GM12878 (cell line): ENCODE measurements at regions of chr5 and their contacts with region 1.

Region 1: GRCh38 chr5:138449501-138450239 is 10.8 kb downstream of the REEP2 start:
- DNase-seq: no peak
- ATAC-seq: peak; percentile 97
- H3K4me3 ChIP-seq: no peak overlapping the region
- H3K27ac ChIP-seq: no peak overlapping the region
- H3K4me1 ChIP-seq: peaks cover 4% of the 10 kb centered on the region; the same call in 1 of the 2 replicates
- H3K27me3 ChIP-seq: no peaks in the 10 kb centered on the region
- CTCF ChIP-seq: peak; percentile 91 to 96 (median 93)
- EP300 ChIP-seq: no peak
- POLR2A ChIP-seq: no peak
- RAD21 ChIP-seq: peak; percentile 63

Region 2: GRCh38 chr5:138369706-138370105 is 80.0 kb before region 1 on chr5:
- CTCF ChIA-PET with region 1: interaction called, 16 read pairs
- POLR2A ChIA-PET with region 1: no interaction called
- RAD21 ChIA-PET with region 1: no interaction called
- SMC1A ChIA-PET with region 1: no interaction called
- in situ Hi-C with region 1: no loop called
- intact Hi-C with region 1: no loop called
- DNase-seq: no peak
- ATAC-seq: peak; percentile 49
- H3K4me3 ChIP-seq: no peak overlapping the region
- H3K27ac ChIP-seq: peak overlapping the region; percentile 29
- H3K4me1 ChIP-seq: peaks cover 19% of the 10 kb centered on the region; the same call in 1 of the 2 replicates
- H3K27me3 ChIP-seq: no peaks in the 10 kb centered on the region
- CTCF ChIP-seq: no peak
- EP300 ChIP-seq: no peak
- POLR2A ChIP-seq: no peak
- RAD21 ChIP-seq: no peak

Region 3: GRCh38 chr5:138498376-138498775 is 48.7 kb after region 1 on chr5:
- CTCF ChIA-PET with region 1: interaction called, 123 read pairs
- POLR2A ChIA-PET with region 1: interaction called, 6 read pairs
- RAD21 ChIA-PET with region 1: interaction called, 56 read pairs
- SMC1A ChIA-PET with region 1: interaction called, 58 read pairs
- in situ Hi-C with region 1: no loop called
- intact Hi-C with region 1: loop called (anchors 1 kb)
- DNase-seq: no peak
- ATAC-seq: no peak
- H3K4me3 ChIP-seq: no peak overlapping the region
- H3K27ac ChIP-seq: no peak overlapping the region
- H3K4me1 ChIP-seq: no peaks in the 10 kb centered on the region
- H3K27me3 ChIP-seq: no peaks in the 10 kb centered on the region
- CTCF ChIP-seq: no peak
- EP300 ChIP-seq: no peak
- POLR2A ChIP-seq: no peak
- RAD21 ChIP-seq: no peak

Region 4: DNA sequence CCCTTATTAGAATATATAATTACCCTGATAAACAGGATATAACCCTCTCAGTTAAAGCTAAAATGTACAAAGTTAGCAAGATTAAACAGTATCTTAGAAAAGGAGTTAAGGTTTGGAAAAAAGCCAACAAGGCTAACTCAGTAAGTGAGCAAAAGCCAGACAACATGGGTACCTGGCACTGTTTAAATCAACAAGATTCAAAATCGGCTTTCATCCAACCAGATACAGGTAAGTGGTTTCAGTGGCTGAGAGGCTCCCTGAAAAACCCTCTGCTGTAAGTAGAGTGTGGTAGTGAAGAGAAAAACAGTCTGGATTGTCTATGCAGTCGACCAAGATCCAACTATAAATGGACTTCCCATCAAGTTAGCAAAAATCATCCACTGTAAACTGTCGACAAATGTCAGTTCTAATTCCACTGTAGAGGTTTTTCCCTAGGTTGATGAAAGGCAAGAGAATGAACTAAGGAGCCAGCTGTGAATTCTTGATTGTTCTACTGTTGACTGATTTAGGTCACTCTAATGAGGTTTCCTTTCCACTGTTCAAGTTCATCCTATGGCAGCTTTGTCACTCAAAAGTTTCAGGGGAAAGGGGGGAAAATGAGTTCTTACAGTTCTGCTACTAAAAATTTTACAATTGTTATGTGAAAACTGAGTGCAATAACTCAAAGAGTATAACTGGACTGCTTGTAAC is 66.0 kb after region 1 on chr5:
- CTCF ChIA-PET with region 1: interaction called, 13 read pairs
- POLR2A ChIA-PET with region 1: no interaction called
- RAD21 ChIA-PET with region 1: no interaction called
- SMC1A ChIA-PET with region 1: no interaction called
- in situ Hi-C with region 1: no loop called
- intact Hi-C with region 1: no loop called
- DNase-seq: no peak
- ATAC-seq: no peak
- H3K4me3 ChIP-seq: no peak overlapping the region
- H3K27ac ChIP-seq: no peak overlapping the region
- H3K4me1 ChIP-seq: no peaks in the 10 kb centered on the region
- H3K27me3 ChIP-seq: no peaks in the 10 kb centered on the region
- CTCF ChIP-seq: no peak
- EP300 ChIP-seq: no peak
- POLR2A ChIP-seq: no peak
- RAD21 ChIP-seq: no peak

Region 5: DNA sequence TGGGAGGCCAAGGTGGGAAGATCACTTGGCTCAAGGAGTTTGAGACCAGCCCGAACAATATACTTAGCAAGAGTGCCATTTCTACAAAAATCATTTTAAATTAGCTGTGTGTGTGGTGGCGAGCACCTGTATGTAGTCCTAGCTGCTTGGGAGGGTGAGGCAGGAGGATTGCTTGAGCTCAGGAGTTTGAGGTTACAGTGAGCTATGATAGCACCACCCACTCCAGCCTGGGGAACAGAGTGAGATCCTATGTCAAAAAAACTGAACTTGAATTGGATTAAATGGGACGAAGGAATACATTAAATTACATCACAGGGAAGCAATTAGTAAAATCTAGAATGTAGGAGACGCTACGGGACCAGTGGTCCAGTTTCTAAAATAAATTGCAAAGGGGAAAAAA is 99.7 kb after region 1 on chr5:
- CTCF ChIA-PET with region 1: interaction called, 15 read pairs
- POLR2A ChIA-PET with region 1: no interaction called
- RAD21 ChIA-PET with region 1: interaction called, 8 read pairs
- SMC1A ChIA-PET with region 1: interaction called, 3 read pairs
- in situ Hi-C with region 1: no loop called
- intact Hi-C with region 1: no loop called
- DNase-seq: no peak
- ATAC-seq: no peak
- H3K4me3 ChIP-seq: no peak overlapping the region
- H3K27ac ChIP-seq: no peak overlapping the region
- H3K4me1 ChIP-seq: peaks cover 3% of the 10 kb centered on the region; the same call in 1 of the 2 replicates
- H3K27me3 ChIP-seq: no peaks in the 10 kb centered on the region
- CTCF ChIP-seq: no peak
- EP300 ChIP-seq: no peak
- POLR2A ChIP-seq: no peak
- RAD21 ChIP-seq: no peak

Region 6: DNA sequence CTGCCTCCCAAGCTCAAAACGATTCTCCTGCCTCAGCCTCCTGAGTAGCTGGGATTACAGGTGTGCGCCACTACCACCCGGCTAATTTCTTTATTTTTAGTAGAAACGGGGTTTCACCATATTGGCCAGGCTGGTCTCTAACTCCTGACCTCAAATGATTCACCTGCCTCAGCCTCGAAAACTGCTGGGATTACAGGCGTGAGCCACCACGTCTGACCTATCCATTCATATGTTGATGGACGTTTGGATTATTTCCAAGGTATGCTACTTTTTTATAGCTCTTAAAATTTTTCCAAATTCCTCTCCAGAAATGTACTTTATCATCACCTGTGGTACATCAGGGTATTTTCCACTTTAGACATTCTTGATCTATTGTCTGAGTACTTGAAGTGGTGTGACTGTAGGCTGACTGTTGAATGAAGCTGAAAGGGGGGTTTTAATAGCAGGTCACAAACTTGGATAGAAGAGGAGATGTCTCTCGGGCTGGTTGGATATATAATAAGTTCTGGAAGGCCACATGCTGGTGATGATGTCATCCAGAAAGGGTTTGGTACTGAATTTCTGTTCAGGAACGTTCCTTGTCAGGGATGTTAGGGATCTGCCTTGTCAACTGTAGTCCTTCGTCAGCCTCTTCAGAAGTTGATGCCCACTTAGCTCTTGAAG is 310.9 kb after region 1 on chr5:
- CTCF ChIA-PET with region 1: no interaction called
- POLR2A ChIA-PET with region 1: no interaction called
- RAD21 ChIA-PET with region 1: no interaction called
- SMC1A ChIA-PET with region 1: no interaction called
- in situ Hi-C with region 1: no loop called
- intact Hi-C with region 1: no loop called
- DNase-seq: no peak
- ATAC-seq: no peak
- H3K4me3 ChIP-seq: no peak overlapping the region
- H3K27ac ChIP-seq: no peak overlapping the region
- H3K4me1 ChIP-seq: peaks cover under 1% of the 10 kb centered on the region
- H3K27me3 ChIP-seq: no peaks in the 10 kb centered on the region
- CTCF ChIP-seq: no peak
- EP300 ChIP-seq: no peak
- POLR2A ChIP-seq: no peak
- RAD21 ChIP-seq: no peak

Region 7: DNA sequence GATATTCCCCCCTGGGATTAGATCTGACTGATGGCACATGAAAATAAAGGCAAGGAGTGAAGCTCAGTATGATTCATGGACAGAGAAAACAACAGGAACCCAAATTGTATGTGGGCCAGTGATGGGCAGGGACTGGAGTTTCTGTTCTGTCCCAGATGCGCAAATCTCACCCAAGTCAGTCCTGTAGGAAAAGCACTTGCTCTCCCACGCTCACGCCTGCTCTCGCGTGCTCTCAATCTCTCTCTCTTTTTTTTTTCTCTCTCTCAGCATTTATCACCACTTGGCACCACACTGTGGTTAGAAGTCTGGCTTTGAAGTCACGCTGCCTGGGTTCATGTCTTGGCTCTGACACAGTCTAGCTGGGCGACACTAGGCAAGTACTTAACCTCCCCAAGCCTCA is 531.9 kb after region 1 on chr5:
- CTCF ChIA-PET with region 1: no interaction called
- POLR2A ChIA-PET with region 1: no interaction called
- RAD21 ChIA-PET with region 1: no interaction called
- SMC1A ChIA-PET with region 1: no interaction called
- in situ Hi-C with region 1: no loop called
- intact Hi-C with region 1: no loop called
- DNase-seq: no peak
- ATAC-seq: no peak
- H3K4me3 ChIP-seq: no peak overlapping the region
- H3K27ac ChIP-seq: no peak overlapping the region
- H3K4me1 ChIP-seq: no peaks in the 10 kb centered on the region
- H3K27me3 ChIP-seq: no peaks in the 10 kb centered on the region
- CTCF ChIP-seq: no peak
- EP300 ChIP-seq: no peak
- POLR2A ChIP-seq: no peak
- RAD21 ChIP-seq: no peak